ENCODE measurements at regions of chr5 and their contacts with region 1.

Region 1: DNA sequence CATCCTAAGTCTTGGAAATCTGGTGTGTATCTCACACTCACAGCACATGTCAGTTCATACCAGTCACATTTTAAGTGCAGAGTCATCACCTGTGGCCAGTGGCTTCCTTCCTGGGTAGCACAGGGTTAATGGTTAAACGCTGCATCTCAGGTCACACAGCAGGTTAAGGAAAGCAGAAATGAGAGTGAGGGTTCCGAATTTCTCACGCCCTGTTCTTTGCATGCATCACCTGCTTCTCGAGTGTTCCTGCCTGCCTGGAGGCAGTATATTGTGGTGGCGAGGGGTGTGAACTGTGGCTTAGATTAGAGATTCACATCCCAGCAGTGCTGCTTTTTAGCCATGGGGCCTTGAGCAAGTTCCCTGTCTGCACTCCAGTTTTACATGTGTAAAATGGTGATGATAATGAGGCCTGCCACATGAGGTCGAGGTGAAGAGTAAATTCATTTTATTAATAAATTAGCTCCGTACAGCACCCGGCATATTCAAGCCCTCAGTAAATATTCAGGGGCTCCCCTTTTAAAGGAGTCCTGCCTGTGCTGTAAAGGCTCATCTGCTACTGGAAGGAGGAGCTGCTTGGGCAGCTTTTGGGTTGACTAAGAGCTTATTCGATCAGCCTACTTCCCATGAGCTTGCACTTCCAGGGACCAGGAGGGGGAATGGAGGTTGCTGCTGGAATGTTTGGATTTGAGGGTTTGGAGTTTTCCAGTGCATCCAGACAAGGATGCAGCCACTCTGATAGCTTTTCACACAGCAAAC is 61.1 kb upstream of the SAP30L start:
- DNase-seq: peak; percentile 99
- ATAC-seq: peak; percentile 97
- H3K4me3 ChIP-seq: no peak overlapping the region
- H3K27ac ChIP-seq: peak overlapping the region; percentile 95
- H3K4me1 ChIP-seq: peaks cover 16% of the 10 kb centered on the region
- H3K27me3 ChIP-seq: no peaks in the 10 kb centered on the region
- CTCF ChIP-seq: no peak
- EP300 ChIP-seq: peak; percentile 83 to 90
- POLR2A ChIP-seq: no peak
- RAD21 ChIP-seq: peak; percentile 23; the same call in 1 of the 2 replicates

Region 2: DNA sequence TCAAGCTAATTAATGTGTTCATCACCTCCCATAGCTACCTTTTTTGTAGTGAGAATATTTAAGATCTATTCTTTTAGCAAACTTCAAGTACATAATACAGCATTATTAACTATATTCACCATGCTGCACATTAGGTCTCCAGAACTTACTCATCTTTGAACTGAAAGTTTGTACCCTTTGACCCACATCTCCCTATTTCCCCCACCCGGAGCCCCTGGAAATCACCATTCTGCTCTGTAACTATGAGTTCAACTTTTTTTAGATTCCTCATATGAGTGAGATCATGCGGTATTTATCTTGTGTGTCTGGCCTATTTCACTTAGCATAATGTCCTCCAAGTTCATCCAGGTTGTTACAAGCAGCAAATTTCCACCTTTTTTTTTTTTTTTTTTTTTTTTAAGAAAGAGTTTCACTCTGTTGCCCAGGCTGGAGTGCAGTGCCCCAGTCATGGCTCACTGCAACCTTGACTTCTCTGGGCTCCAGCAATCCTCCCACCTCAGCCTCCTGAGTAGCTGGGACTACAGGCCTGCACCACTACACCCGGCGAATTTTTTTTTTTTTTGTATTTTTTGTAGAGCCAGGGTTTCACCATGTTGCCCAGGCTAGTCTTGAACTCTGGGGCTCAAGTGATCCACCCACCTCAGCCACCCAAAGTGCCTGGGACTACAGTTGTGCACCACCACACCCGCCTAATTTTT is 39.3 kb before region 1 on chr5:
- CTCF ChIA-PET with region 1: no interaction called
- POLR2A ChIA-PET with region 1: no interaction called
- RAD21 ChIA-PET with region 1: interaction called, 5 read pairs
- SMC1A ChIA-PET with region 1: interaction called, 5 read pairs
- in situ Hi-C with region 1: no loop called
- intact Hi-C with region 1: loop called (anchors 1 kb)
- DNase-seq: peak; percentile 53
- ATAC-seq: peak; percentile 93
- H3K4me3 ChIP-seq: no peak overlapping the region
- H3K27ac ChIP-seq: no peak overlapping the region; the same call in 1 of the 2 replicates
- H3K4me1 ChIP-seq: peaks cover 12% of the 10 kb centered on the region
- H3K27me3 ChIP-seq: no peaks in the 10 kb centered on the region
- CTCF ChIP-seq: no peak
- EP300 ChIP-seq: 0 out of 4 replicates have a peak, but pooled peaks of 1 of the 2 experiments have one; percentile 12
- POLR2A ChIP-seq: no peak
- RAD21 ChIP-seq: no peak

Region 3: DNA sequence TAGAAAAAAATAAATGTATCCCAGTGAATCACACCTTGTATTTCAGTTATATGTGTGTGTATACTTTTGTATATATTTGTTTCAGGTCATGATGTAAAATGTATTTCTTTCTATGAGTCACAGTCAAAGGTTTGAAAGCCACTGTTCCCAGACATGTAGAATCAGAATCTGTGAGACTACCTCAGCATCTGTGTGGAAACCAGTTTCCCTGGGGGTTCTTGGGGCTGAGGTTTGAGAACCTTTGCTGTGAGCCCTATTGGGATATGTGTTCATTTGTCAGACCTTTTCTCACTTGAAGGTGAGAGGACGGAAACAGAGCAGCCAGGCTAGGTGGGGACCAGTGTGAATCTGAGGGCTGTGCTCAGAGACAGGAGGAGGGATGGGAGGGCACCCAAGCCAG is 17.6 kb before region 1 on chr5:
- CTCF ChIA-PET with region 1: no interaction called
- POLR2A ChIA-PET with region 1: no interaction called
- RAD21 ChIA-PET with region 1: interaction called, 5 read pairs
- SMC1A ChIA-PET with region 1: interaction called, 4 read pairs
- in situ Hi-C with region 1: no loop called
- intact Hi-C with region 1: loop called (anchors 1 kb)
- DNase-seq: no peak
- ATAC-seq: peak; percentile 70
- H3K4me3 ChIP-seq: no peak overlapping the region
- H3K27ac ChIP-seq: peak overlapping the region; percentile 64
- H3K4me1 ChIP-seq: no peaks in the 10 kb centered on the region
- H3K27me3 ChIP-seq: no peaks in the 10 kb centered on the region
- CTCF ChIP-seq: no peak
- EP300 ChIP-seq: no peak
- POLR2A ChIP-seq: no peak
- RAD21 ChIP-seq: peak; percentile 20; the same call in 1 of the 2 replicates